ENCODE measurements at regions of chr15 and their contacts with region 1.

Region 1: GRCh38 chr15:99605490-99605931 is 39.7 kb downstream of the MEF2A start:
- DNase-seq: no peak
- H3K4me3 Mint-ChIP-seq: no peak overlapping the region
- H3K27ac Mint-ChIP-seq: peak overlapping the region; percentile 82
- H3K4me1 Mint-ChIP-seq: peaks cover 33% of the 10 kb centered on the region
- H3K27me3 Mint-ChIP-seq: no peaks in the 10 kb centered on the region

Region 2: GRCh38 chr15:99590913-99591646 is 14.4 kb before region 1 on chr15:
- intact Hi-C with region 1: loop called (anchors 1 kb)
- DNase-seq: no peak
- H3K4me3 Mint-ChIP-seq: no peak overlapping the region
- H3K27ac Mint-ChIP-seq: peak overlapping the region; percentile 59
- H3K4me1 Mint-ChIP-seq: peaks cover 31% of the 10 kb centered on the region
- H3K27me3 Mint-ChIP-seq: peaks cover 1% of the 10 kb centered on the region

Measured in activated T-helper 1 cell treated with anti-CD3 and anti-CD28 coated beads, Interleukin-12 subunit alpha, Interleukin-12 subunit beta, Interleukin-2, Interleukin-4 antibody, amounts not matched to agents 30 ng/mL and 10 ng/mL and 1 ng/mL, durations not matched to agents 14 hours and 24 hours and 36 hours (primary cell).